Prostate gland (tissue), 2 donors: ENCODE measurements at regions of chr12 and their contacts with region 1.

Region 1: DNA sequence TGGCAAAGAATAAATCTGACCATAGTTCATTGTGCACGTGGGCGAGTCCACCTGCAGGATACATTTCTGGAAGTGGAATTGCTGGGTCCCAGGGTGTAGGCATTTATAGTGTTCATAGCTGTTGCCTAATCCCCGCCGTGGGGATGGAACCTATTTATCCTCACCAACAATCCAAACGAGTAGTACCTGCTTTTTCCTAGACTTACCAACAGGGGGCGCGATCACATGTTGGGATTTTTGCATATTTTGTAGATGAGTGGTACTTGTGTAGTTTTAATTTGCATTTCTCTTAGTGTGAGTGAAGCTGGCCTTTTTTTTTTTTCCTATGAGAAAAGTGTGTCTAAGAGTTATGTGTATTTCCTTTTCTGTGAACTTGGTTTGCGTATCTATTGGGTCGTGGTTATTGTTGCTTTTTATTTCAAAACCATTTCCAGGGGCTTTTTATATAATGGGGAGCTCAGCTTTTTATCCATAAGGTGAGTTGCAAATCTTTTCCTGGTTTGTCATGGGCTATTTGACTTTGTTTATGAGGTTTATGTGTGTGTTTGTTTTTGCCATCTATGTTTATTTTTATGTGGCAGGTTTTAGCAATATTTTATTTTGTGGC is 67.2 kb downstream of the CCDC92 start:
- DNase-seq: no peak
- H3K4me3 ChIP-seq: no peak overlapping the region
- H3K27ac ChIP-seq: no peak overlapping the region
- H3K4me1 ChIP-seq: no peaks in the 10 kb centered on the region
- H3K27me3 ChIP-seq: no peaks in the 10 kb centered on the region
- CTCF ChIP-seq: peak; percentile 18 to 65 (median 58)
- POLR2A ChIP-seq: no peak

Region 2: GRCh38 chr12:123958462-123958861 is 53.0 kb after region 1 on chr12:
- intact Hi-C with region 1: no loop called
- DNase-seq: no peak
- H3K4me3 ChIP-seq: no peak overlapping the region
- H3K27ac ChIP-seq: no peak overlapping the region
- H3K4me1 ChIP-seq: no peaks in the 10 kb centered on the region
- H3K27me3 ChIP-seq: no peaks in the 10 kb centered on the region
- CTCF ChIP-seq: no peak
- POLR2A ChIP-seq: no peak

Region 3: GRCh38 chr12:123983822-123984485 is 78.5 kb after region 1 on chr12:
- intact Hi-C with region 1: loop called (anchors 5 kb)
- DNase-seq: peak; percentile 27
- H3K4me3 ChIP-seq: no peak overlapping the region
- H3K27ac ChIP-seq: no peak overlapping the region
- H3K4me1 ChIP-seq: no peaks in the 10 kb centered on the region
- H3K27me3 ChIP-seq: no peaks in the 10 kb centered on the region
- CTCF ChIP-seq: peak in 3 of 4 experiments; percentile 51 to 57 (median 52)
- POLR2A ChIP-seq: no peak

Region 4: GRCh38 chr12:124036674-124037109 is 131.3 kb after region 1 on chr12:
- intact Hi-C with region 1: loop called (anchors 5 kb)
- DNase-seq: peak; percentile 37
- H3K4me3 ChIP-seq: no peak overlapping the region
- H3K27ac ChIP-seq: no peak overlapping the region
- H3K4me1 ChIP-seq: no peaks in the 10 kb centered on the region
- H3K27me3 ChIP-seq: no peaks in the 10 kb centered on the region
- CTCF ChIP-seq: peak; percentile 80 to 92 (median 88)
- POLR2A ChIP-seq: no peak